ENCODE measurements at regions of chr14 and their contacts with region 1.

Region 1: GRCh38 chr14:57974896-57975295 is 109.0 kb upstream of the SLC35F4 start:
- DNase-seq: no peak
- ATAC-seq: no peak
- H3K4me3 ChIP-seq: no peak overlapping the region
- H3K4me3 Mint-ChIP-seq: no peak overlapping the region
- H3K27ac ChIP-seq: no peak overlapping the region
- H3K27ac Mint-ChIP-seq: no peak overlapping the region
- H3K4me1 ChIP-seq: no peaks in the 10 kb centered on the region
- H3K4me1 Mint-ChIP-seq: no peaks in the 10 kb centered on the region
- H3K27me3 ChIP-seq: no peaks in the 10 kb centered on the region
- H3K27me3 Mint-ChIP-seq: no peaks in the 10 kb centered on the region
- CTCF ChIP-seq: no peak

Region 2: DNA sequence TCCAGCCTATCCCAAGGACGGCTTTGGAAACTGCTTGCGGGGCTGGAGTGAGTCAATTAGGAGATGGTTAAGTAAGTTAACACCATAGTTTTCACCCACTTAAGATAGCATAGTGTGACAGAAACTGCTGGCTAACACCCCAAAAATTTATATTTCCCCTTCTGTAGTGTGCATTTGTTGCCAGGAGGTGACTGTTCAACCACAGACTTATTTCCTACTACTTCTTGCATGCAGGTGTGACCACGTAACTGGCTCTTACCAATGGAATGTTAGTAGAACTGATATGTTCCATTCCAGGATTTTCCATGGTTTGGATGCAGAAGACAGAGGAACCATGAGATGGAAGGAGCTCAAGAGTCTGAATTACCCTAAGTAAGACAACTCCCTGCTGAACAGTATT is 56.1 kb before region 1 on chr14:
- CTCF ChIA-PET with region 1: no interaction called
- POLR2A ChIA-PET with region 1: no interaction called
- intact Hi-C with region 1: loop called in 1 of 2 experiments (anchors 1 kb)
- DNase-seq: no peak
- ATAC-seq: no peak
- H3K4me3 ChIP-seq: no peak overlapping the region
- H3K4me3 Mint-ChIP-seq: no peak overlapping the region
- H3K27ac ChIP-seq: no peak overlapping the region
- H3K27ac Mint-ChIP-seq: no peak overlapping the region
- H3K4me1 ChIP-seq: no peaks in the 10 kb centered on the region
- H3K4me1 Mint-ChIP-seq: no peaks in the 10 kb centered on the region
- H3K27me3 ChIP-seq: no peaks in the 10 kb centered on the region
- H3K27me3 Mint-ChIP-seq: peaks cover 13% of the 10 kb centered on the region
- CTCF ChIP-seq: no peak

Region 3: DNA sequence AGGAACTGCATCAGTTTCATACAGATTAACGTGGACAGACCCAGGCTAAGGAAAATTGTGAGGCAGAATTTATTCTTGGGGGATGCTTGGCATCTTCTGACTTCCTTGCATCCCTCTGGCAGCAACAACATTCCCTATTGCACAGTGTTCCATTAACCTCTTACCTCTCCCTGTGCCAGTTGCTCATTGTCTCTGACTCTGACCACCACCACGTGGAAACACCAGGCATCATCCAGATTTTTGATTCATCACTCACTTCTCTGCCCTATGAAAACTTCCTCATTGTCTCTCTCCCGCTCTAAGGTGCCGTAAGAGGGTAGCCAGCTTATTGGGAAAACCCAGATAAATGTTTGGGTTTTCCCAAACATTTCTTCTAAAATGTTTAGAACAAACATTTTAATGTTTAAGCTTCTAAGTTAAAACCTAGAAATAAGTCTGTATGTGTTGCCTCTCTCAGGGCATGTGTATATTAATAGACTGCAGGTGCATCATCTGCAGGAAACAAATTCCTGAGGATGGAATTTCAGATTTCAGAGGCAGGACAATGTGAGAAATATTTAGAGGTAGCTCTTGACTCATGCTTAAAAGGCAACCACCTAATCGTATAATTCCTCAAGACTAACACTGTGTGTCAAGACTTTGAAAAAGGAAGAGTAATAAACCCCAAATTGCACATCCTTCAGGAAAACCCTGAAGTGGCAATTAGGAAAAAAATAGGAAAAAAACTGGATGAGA is 44.5 kb before region 1 on chr14:
- CTCF ChIA-PET with region 1: no interaction called
- POLR2A ChIA-PET with region 1: no interaction called
- intact Hi-C with region 1: no loop called
- DNase-seq: no peak
- ATAC-seq: no peak
- H3K4me3 ChIP-seq: no peak overlapping the region
- H3K4me3 Mint-ChIP-seq: no peak overlapping the region
- H3K27ac ChIP-seq: no peak overlapping the region
- H3K27ac Mint-ChIP-seq: no peak overlapping the region
- H3K4me1 ChIP-seq: no peaks in the 10 kb centered on the region
- H3K4me1 Mint-ChIP-seq: no peaks in the 10 kb centered on the region
- H3K27me3 ChIP-seq: no peaks in the 10 kb centered on the region
- H3K27me3 Mint-ChIP-seq: peaks cover 9% of the 10 kb centered on the region
- CTCF ChIP-seq: no peak

Measured in CD8-positive, alpha-beta T cell (primary cell).